GM10248 (cell line): ENCODE measurements at regions of chr6 and their contacts with region 1.

Region 1: DNA sequence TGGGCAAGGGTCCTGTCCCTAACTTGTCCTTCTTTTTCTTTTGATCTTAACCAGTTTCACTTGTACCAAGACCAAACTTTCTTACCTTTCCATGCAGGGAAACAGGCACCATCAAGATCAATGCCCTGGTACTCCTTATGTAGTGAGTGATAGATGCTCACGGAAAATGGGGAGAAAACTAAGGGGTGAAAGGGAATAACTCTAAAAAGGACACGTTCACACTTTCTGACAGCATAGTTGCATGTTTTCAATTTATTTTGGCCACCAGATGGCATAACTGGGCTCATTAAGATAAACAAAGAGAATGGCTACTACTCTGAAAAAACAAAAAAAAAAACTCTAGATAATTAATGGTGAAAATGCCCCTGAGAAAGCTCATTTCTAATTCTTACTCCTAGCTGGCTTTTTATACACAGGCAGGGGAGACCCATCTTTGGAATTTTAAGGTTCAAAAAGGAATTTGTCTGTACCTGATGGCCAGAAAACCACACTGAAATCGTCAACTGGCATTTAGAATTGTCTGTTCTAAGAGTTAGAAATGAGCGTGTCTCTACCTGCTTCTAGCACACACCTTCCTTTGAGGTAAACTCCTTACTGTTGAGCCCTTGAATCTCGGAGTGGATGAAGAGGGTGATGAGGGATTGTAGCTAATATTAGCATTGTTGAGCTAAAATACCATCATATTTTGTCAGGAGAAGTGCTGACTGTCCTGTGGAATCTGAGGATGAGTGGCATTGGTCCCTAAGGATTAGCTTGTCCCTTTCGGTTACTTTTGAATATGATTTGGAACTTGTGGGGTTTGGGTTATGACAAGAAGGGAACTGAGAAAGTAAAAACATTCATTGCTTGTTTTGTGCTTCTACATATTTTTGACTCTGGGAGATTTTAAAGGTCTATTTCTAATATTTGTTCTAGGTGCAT is 62.2 kb upstream of the DDR1 start:
- DNase-seq: peak; percentile 53
- CTCF ChIP-seq: peak; percentile 51

Region 2: DNA sequence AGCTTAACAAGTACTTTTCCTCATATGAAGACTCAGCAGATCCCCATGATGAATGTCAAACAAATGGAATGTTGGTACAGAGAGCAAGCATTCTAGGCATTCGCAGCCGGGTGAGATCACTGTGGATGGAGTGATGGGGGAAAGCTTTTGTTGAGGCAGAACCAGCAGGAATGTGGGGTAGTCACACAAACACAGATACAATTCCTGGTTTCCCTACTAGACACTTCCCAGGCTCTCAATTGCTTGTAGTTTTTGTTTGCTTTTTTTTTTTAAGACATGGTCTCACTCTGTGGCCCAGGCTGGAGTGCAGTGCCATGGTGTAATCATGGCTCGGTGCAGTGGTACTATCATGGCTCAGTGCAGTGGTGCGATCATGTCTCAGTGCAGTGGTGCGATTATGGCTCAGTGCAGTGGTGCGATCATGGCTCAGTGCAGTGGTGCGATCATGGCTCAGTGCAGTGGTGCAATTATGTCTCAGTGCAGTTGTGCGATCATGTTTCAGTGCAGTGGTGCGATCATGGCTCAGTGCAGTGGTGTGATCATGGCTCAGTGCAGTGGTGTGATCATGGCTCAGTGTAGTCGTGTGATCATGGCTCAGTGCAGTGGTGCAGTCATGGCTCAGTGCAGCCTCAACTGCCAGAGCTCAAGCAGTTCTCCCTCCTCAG is 62.4 kb before region 1 on chr6:
- CTCF ChIA-PET with region 1: interaction called, 11 read pairs
- POLR2A ChIA-PET with region 1: no interaction called
- DNase-seq: no peak
- CTCF ChIP-seq: no peak

Region 3: DNA sequence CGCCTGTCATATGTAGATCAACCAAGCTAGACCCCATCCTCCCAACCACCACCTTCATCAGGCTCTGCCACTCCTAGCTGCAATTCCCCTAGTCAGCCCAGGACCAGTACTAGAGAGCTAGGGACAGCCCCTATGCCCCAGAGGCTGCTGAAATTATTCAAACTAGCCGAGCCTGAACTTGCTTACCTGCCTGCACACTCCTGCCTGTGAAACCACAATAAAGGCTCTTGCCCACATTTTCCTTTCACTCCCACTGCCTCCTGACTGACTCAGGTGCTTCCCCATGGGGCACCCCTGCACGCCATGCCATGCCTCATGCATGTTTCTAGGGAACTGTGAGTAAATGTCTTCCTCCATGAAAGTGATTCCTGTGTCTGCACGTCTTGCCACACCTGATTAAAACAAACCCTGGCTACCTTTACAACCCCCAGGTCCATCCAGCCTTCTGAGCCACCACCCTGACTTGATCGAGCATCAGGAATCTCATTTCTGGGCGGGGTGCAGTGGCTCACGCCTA is 11.3 kb before region 1 on chr6:
- CTCF ChIA-PET with region 1: interaction called, 252 read pairs
- POLR2A ChIA-PET with region 1: no interaction called
- DNase-seq: peak; percentile 56
- CTCF ChIP-seq: no peak

Region 4: DNA sequence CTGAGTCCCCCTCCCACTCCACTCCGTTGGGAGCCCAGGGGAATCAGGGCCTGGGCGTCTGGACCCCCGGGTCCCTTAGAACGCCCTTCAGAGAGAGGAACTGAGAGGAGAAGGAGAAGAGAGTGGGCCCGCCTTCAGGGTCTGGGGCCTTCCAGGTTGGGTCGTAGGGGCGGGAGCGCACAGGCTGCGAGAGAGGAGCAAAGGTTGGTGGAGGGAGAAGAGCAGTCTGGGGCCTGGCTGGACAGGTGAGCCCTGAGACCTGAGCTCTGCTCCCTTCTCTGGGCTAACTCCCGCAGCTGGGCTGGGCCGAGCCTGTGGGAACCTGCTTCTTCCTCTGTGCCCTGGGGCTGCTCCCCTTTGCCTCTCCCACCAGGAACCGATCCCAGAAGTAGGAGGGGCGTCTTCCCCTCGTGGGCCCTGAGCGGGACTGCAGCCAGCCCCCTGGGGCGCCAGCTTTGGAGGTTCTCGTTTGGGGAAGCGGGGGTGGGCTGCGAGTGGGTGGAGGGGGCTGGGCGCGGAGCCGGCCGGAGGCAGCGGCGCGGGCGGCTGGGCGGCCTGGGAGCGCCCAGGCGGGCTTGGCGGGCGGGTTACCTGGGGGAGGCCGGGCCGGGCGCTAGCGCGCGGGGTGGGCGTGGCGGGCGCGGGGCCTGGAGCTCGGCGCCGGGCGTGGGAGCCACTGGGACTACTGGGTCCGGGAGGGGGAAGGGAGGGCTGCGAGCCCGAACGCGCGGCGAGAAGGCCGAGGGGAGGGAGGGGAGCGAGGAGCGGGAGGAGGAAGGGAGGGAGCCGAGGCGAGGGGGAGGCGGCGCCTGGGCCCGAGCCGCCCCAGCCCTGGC is 61.8 kb after region 1 on chr6 and contains the start of gene DDR1:
- CTCF ChIA-PET with region 1: interaction called, 30 read pairs
- POLR2A ChIA-PET with region 1: interaction called, 4 read pairs
- DNase-seq: peak; percentile 84
- CTCF ChIP-seq: no peak

Region 5: GRCh38 chr6:31087494-31088089 is 265.5 kb after region 1 on chr6:
- CTCF ChIA-PET with region 1: interaction called, 53 read pairs
- POLR2A ChIA-PET with region 1: no interaction called
- DNase-seq: peak; percentile 86
- CTCF ChIP-seq: peak; percentile 83